Caco-2 (cell line): ENCODE measurements at regions of chr1 and their contacts with region 1.

Region 1: DNA sequence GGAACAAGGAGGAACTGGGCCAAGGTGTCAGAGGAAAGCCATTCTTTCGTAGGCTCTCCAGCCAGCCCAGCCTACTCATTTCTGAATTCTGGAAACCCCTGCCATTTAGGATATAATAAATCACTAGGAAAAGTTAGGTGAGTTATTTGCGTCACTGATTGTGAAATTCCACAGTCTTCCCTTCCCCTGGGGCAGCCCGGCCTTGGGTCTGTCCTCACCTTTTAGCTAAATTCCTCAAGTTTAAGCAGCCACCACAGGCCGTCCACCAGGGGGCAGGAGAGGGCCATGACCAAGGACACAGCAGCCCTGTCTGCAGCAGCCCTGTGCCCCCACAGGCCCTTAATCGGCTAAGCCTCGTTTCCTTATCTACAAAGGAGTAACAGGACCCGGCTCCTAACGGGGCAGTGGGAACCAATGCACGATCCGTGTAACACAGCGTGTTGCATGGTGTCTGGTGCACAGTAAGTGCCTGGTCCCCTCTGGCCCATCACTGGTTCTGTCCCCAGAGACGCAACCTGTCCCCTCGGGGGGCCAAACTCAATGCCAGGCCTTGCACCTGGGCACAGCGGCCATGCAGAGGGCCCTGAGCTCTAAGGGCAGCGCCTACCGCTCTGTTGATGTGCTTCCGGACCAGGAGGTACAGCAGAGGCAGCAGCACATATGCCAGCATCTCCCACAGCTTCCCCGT is 18.1 kb downstream of the GPR157 start:
- DNase-seq: peak; percentile 96 to 97
- H3K4me3 ChIP-seq: no peak overlapping the region
- H3K4me3 Mint-ChIP-seq: peak overlapping the region; percentile 19
- H3K27ac Mint-ChIP-seq: peak overlapping the region; percentile 91
- H3K4me1 ChIP-seq: peaks cover 52% of the 10 kb centered on the region
- H3K4me1 Mint-ChIP-seq: peaks cover 26% of the 10 kb centered on the region
- H3K27me3 ChIP-seq: no peaks in the 10 kb centered on the region
- H3K27me3 Mint-ChIP-seq: no peaks in the 10 kb centered on the region
- CTCF ChIP-seq: peak; percentile 89 to 91

Region 2: GRCh38 chr1:9128520-9129265 is 17.9 kb after region 1 on chr1 and contains the start of gene GPR157:
- CTCF ChIA-PET with region 1: interaction called, 12 read pairs
- POLR2A ChIA-PET with region 1: no interaction called
- intact Hi-C with region 1: loop called (anchors 1 kb)
- DNase-seq: peak; percentile 82 to 85
- H3K4me3 ChIP-seq: peak within 1 kb of the TSS; percentile 66
- H3K4me3 Mint-ChIP-seq: peak within 1 kb of the TSS; percentile 94
- H3K27ac Mint-ChIP-seq: peak within 1 kb of the TSS; percentile 93
- H3K4me1 ChIP-seq: peaks cover 13% of the 10 kb centered on the region
- H3K4me1 Mint-ChIP-seq: peaks cover 6% of the 10 kb centered on the region
- H3K27me3 ChIP-seq: no peaks in the 10 kb centered on the region
- H3K27me3 Mint-ChIP-seq: no peaks in the 10 kb centered on the region
- CTCF ChIP-seq: peak in 1 of 2 experiments; percentile 8
- total RNA-seq, gene GPR157: 14.0 and 17.2 TPM in 2 replicates

Region 3: DNA sequence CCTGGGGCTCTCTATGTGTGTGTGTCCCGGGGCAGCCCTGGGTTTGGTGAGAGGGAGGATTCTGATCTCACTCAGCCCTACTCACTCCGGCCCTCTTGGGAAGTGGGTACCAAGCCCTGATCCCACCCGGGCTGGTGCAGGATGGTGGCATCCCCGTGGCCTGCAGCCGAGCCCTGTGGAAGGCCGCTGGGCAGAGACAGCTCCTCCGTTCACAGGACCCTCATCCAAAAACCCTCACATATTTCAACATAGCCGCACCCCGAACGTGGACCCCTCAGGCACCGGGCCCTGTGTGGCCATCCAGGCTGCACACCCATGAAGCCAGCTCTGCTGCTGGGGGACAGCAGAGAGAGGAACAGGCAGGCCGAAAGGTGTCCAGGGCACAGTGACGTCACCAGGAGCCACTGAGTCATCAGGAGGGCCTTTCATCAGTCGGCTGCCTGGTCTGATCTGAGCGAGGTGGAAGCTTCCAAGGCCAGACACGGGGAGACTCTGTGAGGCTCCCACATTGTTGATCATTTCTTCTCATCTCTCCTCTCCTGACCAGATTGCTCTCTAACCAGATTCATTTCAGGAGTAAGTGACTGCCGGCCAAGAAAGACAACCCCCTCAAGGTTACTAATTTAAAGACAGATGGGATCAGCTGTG is 34.3 kb after region 1 on chr1:
- CTCF ChIA-PET with region 1: interaction called, 5 read pairs
- POLR2A ChIA-PET with region 1: no interaction called
- intact Hi-C with region 1: loop called (anchors 1 kb)
- DNase-seq: no peak
- H3K4me3 ChIP-seq: no peak overlapping the region
- H3K4me3 Mint-ChIP-seq: no peak overlapping the region
- H3K27ac Mint-ChIP-seq: no peak overlapping the region
- H3K4me1 ChIP-seq: no peaks in the 10 kb centered on the region
- H3K4me1 Mint-ChIP-seq: no peaks in the 10 kb centered on the region
- H3K27me3 ChIP-seq: no peaks in the 10 kb centered on the region
- H3K27me3 Mint-ChIP-seq: no peaks in the 10 kb centered on the region
- CTCF ChIP-seq: no peak

Region 4: DNA sequence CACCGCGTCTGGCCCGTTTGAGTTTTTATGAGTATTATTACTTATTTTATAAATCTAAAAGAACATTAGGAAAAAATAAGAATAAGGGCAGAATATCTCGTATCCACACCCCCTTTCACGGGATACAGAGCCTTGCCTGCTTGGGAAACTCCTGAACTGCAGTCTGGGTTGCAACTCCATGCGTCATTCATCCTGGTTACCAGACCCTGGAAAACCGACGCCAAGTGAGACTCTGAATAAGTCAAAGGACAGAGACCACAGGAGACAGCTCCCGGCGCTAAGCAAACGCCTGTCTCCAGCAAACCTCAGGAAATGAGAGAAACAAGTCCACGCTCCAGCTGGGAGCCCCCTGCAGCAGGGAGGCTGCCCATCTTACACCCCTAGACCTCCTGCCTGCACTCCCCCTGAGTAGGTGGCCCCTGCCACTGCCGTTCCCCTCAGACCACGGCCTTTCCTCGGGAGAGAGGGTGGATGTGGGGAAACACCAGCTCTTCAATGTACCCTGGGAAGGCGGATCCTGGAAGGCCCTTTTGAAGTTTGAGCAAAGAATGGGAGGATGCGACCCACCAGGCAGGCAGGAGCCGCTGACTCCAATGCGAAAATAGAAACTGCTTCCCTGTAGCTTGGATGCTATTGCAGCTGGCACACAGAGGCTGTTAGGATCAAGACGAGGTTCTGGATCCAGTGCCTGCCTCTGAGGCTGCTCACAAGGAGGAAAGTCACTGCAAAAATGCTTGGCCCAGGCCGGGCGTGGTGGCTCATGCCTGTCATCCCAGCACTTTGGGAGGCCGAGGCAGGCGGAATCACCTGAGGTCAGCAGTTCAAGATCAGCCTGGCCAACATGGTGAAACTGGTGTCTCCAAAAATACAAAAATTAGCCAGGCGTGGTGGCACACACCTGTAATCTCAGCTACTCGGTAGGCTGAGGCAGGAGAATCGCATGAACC is 55.7 kb after region 1 on chr1:
- CTCF ChIA-PET with region 1: no interaction called
- POLR2A ChIA-PET with region 1: no interaction called
- intact Hi-C with region 1: no loop called
- DNase-seq: no peak
- H3K4me3 ChIP-seq: no peak overlapping the region
- H3K4me3 Mint-ChIP-seq: no peak overlapping the region
- H3K27ac Mint-ChIP-seq: no peak overlapping the region
- H3K4me1 ChIP-seq: peaks cover 24% of the 10 kb centered on the region
- H3K4me1 Mint-ChIP-seq: peaks cover 9% of the 10 kb centered on the region
- H3K27me3 ChIP-seq: no peaks in the 10 kb centered on the region
- H3K27me3 Mint-ChIP-seq: no peaks in the 10 kb centered on the region
- CTCF ChIP-seq: no peak

Region 5: GRCh38 chr1:9181176-9181906 is 70.5 kb after region 1 on chr1:
- CTCF ChIA-PET with region 1: interaction called, 3 read pairs
- POLR2A ChIA-PET with region 1: no interaction called
- intact Hi-C with region 1: loop called (anchors 1 kb)
- DNase-seq: peak; percentile 64 to 87
- H3K4me3 ChIP-seq: peak overlapping the region; percentile 75
- H3K4me3 Mint-ChIP-seq: peak overlapping the region; percentile 87
- H3K27ac Mint-ChIP-seq: peak overlapping the region; percentile 72
- H3K4me1 ChIP-seq: peaks cover 15% of the 10 kb centered on the region; the same call in 1 of the 2 replicates
- H3K4me1 Mint-ChIP-seq: peaks cover 5% of the 10 kb centered on the region
- H3K27me3 ChIP-seq: no peaks in the 10 kb centered on the region
- H3K27me3 Mint-ChIP-seq: no peaks in the 10 kb centered on the region
- CTCF ChIP-seq: peak; percentile 86 to 95

Region 6: GRCh38 chr1:9196129-9197040 is 85.6 kb after region 1 on chr1:
- CTCF ChIA-PET with region 1: interaction called, 13 read pairs
- POLR2A ChIA-PET with region 1: no interaction called
- intact Hi-C with region 1: loop called (anchors 1 kb)
- DNase-seq: peak; percentile 59 to 67
- H3K4me3 ChIP-seq: no peak overlapping the region
- H3K4me3 Mint-ChIP-seq: no peak overlapping the region
- H3K27ac Mint-ChIP-seq: no peak overlapping the region
- H3K4me1 ChIP-seq: peaks cover 7% of the 10 kb centered on the region; the same call in 1 of the 2 replicates
- H3K4me1 Mint-ChIP-seq: no peaks in the 10 kb centered on the region
- H3K27me3 ChIP-seq: no peaks in the 10 kb centered on the region
- H3K27me3 Mint-ChIP-seq: no peaks in the 10 kb centered on the region
- CTCF ChIP-seq: peak; percentile 72 to 80

Region 7: GRCh38 chr1:9249534-9250410 is 139.0 kb after region 1 on chr1:
- CTCF ChIA-PET with region 1: interaction called, 8 read pairs
- POLR2A ChIA-PET with region 1: no interaction called
- intact Hi-C with region 1: loop called (anchors 1 kb)
- DNase-seq: peak in 1 of 2 experiments; percentile 49
- H3K4me3 ChIP-seq: no peak overlapping the region
- H3K4me3 Mint-ChIP-seq: no peak overlapping the region
- H3K27ac Mint-ChIP-seq: peak overlapping the region; percentile 14
- H3K4me1 ChIP-seq: peaks cover 27% of the 10 kb centered on the region
- H3K4me1 Mint-ChIP-seq: peaks cover 20% of the 10 kb centered on the region
- H3K27me3 ChIP-seq: no peaks in the 10 kb centered on the region
- H3K27me3 Mint-ChIP-seq: no peaks in the 10 kb centered on the region
- CTCF ChIP-seq: peak; percentile 36 to 54

Region 8: DNA sequence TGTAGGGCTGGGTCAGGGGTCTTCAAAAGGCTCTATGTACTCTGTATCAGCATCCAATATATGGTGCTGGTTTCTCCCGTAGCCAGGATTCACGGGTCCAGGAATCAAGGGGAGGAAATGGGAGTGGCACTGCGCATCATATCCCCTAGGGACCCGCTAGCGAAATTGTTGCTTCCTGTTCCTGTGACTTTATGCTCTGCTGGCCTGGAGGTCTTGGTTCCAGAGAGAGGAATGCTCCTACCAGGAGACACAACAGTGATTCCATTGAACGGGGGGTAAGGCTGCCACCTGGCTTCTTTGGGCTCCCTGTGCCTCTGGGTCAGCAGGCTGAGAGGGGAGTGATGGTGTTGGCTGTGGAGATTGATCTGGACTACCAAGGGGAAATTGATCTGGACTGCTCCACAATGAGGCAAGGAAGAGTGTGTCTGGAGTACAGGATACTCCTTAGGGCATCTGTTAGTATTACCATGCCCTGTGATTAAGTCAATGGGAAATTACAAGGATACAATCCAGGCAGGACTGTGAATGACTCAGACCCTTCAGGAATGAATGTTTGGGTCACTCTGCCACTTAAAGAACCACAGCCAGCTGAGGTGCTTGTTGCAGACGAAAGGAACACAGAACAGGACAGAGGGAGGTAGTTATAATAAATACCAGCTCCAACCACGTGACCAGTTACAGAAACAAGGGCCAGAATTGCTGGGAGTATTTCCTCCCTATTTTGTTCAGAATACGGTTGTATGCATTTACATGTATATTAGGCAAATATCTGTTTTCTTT is 192.1 kb after region 1 on chr1:
- CTCF ChIA-PET with region 1: no interaction called
- POLR2A ChIA-PET with region 1: interaction called, 17 read pairs
- intact Hi-C with region 1: no loop called
- DNase-seq: no peak
- H3K4me3 ChIP-seq: no peak overlapping the region
- H3K4me3 Mint-ChIP-seq: no peak overlapping the region
- H3K27ac Mint-ChIP-seq: peak overlapping the region; percentile 47
- H3K4me1 ChIP-seq: peaks cover 33% of the 10 kb centered on the region
- H3K4me1 Mint-ChIP-seq: peaks cover 20% of the 10 kb centered on the region
- H3K27me3 ChIP-seq: no peaks in the 10 kb centered on the region
- H3K27me3 Mint-ChIP-seq: no peaks in the 10 kb centered on the region
- CTCF ChIP-seq: no peak